ENCODE measurements at regions of chr7 and their contacts with region 1.

Region 1: DNA sequence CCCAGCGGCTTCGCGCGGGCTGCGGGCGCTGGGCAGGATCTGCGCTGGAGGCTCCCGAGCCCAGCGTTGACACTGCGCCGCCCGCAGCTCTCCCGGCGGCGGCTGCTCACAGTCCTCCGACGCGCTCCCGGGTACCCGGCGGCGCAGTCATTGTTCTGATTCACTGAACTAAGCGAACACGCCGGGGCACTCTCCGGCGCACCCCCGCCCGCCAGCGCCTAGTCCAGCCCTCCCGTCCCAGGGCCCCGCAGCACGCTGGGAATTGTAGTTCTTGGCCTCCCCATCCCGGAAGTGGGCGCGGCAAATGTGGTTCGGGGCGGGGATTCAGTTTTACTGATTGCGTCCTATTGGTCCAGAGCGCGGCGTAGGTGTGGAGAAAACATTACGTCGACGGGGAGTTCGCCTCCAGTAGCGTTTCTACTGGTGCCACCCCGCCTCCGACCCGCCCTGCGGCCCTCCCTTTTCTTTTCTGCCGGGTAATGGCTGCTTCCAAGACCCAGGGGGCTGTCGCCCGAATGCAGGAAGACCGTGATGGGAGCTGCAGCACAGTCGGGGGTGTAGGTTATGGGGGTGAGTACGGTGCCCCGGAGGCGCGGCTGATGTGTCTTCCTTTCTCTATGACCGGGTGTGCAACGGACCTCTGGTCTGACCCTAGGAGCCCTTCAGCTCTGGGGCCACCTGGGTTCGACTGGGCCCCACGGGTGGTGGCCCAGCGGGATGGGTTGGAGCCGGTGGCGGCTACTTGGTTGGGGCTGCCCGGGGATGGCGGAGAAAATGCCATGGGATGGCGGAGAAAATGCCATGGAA is at the starts of genes DOCK4 and ZNF277:
- DNase-seq: peak; percentile 100
- H3K4me3 Mint-ChIP-seq: peak within 1 kb of the TSS; percentile 91
- H3K27ac Mint-ChIP-seq: peak within 1 kb of the TSS; percentile 83
- H3K4me1 Mint-ChIP-seq: peaks cover 30% of the 10 kb centered on the region
- H3K27me3 Mint-ChIP-seq: peaks cover 36% of the 10 kb centered on the region
- total RNA-seq, gene DOCK4: 0.33 and 0.89 TPM in 2 replicates
- total RNA-seq, gene ZNF277: 10.1 and 13.7 TPM in 2 replicates

Region 2: GRCh38 chr7:111561885-111562732 is 644.3 kb before region 1 on chr7 and contains the start of gene IMMP2L:
- intact Hi-C with region 1: loop called (anchors 2 kb)
- DNase-seq: peak; percentile 98
- H3K4me3 Mint-ChIP-seq: peak within 1 kb of the TSS; percentile 92
- H3K27ac Mint-ChIP-seq: peak within 1 kb of the TSS; percentile 91
- H3K4me1 Mint-ChIP-seq: peaks cover 32% of the 10 kb centered on the region
- H3K27me3 Mint-ChIP-seq: peaks cover 9% of the 10 kb centered on the region
- total RNA-seq, gene IMMP2L: 13.8 and 16.7 TPM in 2 replicates

Region 3: GRCh38 chr7:112449902-112450806 is 243.7 kb after region 1 on chr7 and contains the start of gene IFRD1:
- intact Hi-C with region 1: loop called (anchors 1 kb)
- DNase-seq: peak; percentile 100
- H3K4me3 Mint-ChIP-seq: peak within 1 kb of the TSS; percentile 99
- H3K27ac Mint-ChIP-seq: peak within 1 kb of the TSS; percentile 99
- H3K4me1 Mint-ChIP-seq: peaks cover 46% of the 10 kb centered on the region
- H3K27me3 Mint-ChIP-seq: no peaks in the 10 kb centered on the region
- total RNA-seq, gene IFRD1: 70.7 and 72.8 TPM in 2 replicates

Region 4: DNA sequence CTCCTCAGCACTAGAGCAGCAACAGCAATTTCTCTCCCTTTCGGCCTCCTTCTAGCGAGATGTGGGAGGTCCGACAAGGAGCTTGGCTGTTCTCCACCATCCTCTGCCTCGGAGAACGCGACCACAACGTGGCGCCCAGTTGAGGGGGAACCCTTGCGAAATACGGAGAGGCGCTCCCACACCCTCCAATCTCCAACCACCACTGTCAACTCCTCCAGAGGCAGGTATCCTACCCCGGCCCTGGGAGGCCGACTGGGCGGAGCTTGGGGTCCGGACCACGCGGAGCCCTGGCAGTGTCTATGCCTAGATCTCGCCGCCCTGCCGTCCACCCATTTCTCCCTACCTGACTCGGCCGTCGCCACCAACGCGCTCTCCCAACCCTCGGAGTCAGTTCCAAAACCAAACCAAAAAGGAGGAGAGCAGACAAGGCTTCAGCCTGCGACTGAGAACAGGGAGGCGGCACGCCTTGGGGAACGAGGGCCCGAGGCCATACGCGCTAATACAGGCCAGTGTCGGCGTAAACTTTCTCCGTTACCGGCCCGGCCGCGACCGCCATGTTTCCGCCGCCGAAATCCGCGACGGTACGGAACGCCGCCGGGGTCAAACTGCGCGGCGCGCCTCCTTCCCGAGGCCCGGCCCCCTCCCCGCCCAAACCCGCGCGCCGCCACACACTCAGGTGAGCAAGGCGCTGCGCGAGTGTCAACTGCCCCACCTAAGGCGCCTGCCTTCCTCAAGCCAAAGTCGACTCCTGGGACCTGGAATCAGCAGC is 583.6 kb after region 1 on chr7 and contains the start of gene TMEM168:
- intact Hi-C with region 1: loop called (anchors 10 kb)
- DNase-seq: peak; percentile 95
- H3K4me3 Mint-ChIP-seq: peak within 1 kb of the TSS; percentile 94
- H3K27ac Mint-ChIP-seq: peak within 1 kb of the TSS; percentile 91
- H3K4me1 Mint-ChIP-seq: peaks cover 35% of the 10 kb centered on the region
- H3K27me3 Mint-ChIP-seq: no peaks in the 10 kb centered on the region
- total RNA-seq, gene TMEM168: 16.2 and 18.3 TPM in 2 replicates

Region 5: DNA sequence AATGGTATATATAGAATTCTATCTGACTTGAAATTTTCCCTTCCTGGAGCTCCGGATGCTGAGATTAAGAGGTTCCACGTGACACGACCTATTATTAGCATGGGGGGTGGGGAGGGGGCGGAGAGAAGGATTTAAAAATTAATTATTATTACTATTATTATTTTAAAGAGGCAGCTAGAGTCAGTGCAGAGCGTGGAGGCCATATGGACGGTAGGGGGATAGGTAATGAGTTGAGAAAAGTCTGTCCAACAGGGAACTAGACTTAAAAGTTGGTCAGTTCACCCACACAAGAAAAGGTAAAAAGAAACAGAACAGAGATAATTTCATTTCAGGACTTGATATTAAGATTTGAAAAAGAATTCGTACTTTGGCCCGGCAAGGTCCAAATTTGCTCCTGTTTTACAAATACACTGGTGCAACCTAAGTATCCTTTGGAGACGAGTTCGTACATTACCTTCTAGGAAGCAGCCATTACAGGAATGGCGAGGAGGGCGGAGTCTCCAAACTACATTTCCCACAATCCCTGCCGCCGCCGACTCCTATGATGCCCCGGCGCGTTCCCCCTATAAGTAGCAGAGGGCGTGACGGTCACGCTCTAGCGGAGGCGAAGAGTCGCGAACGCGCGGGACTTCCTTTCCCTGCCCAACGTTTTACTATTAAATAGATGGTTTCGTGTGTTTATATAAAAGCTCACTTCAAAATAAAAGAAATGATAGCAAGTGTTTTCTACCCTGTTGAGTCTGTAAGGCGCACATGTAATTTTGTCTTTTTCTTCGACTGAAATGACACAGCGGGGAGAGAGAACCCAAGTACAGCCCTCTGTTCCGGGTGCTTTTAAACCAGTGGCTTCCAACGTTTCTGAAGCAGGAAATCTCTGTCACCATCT is 911.9 kb after region 1 on chr7 and contains the start of gene SMIM30:
- intact Hi-C with region 1: loop called (anchors 1 kb)
- DNase-seq: peak; percentile 96
- H3K4me3 Mint-ChIP-seq: peak within 1 kb of the TSS; percentile 93
- H3K27ac Mint-ChIP-seq: peak within 1 kb of the TSS; percentile 91
- H3K4me1 Mint-ChIP-seq: peaks cover 21% of the 10 kb centered on the region
- H3K27me3 Mint-ChIP-seq: no peaks in the 10 kb centered on the region
- total RNA-seq, gene SMIM30: 35.0 and 37.7 TPM in 2 replicates

Measured in activated CD4-positive, alpha-beta T cell treated with anti-CD3 and anti-CD28 coated beads, Interleukin-2, amount 10 ng/mL, durations not matched to agents 24 days and 14 days (primary cell).